IMR-90 (cell line): ENCODE measurements at regions of chr14 and their contacts with region 1.

Region 1: GRCh38 chr14:64478634-64479250 is 13.4 kb downstream of the AKAP5 start:
- DNase-seq: peak; percentile 37
- ATAC-seq: peak; percentile 56
- H3K4me3 ChIP-seq: no peak overlapping the region
- H3K27ac ChIP-seq: no peak overlapping the region
- H3K4me1 ChIP-seq: no peaks in the 10 kb centered on the region
- H3K27me3 ChIP-seq: no peaks in the 10 kb centered on the region
- CTCF ChIP-seq: peak; percentile 60
- POLR2A ChIP-seq: no peak
- RAD21 ChIP-seq: peak; percentile 62

Region 2: DNA sequence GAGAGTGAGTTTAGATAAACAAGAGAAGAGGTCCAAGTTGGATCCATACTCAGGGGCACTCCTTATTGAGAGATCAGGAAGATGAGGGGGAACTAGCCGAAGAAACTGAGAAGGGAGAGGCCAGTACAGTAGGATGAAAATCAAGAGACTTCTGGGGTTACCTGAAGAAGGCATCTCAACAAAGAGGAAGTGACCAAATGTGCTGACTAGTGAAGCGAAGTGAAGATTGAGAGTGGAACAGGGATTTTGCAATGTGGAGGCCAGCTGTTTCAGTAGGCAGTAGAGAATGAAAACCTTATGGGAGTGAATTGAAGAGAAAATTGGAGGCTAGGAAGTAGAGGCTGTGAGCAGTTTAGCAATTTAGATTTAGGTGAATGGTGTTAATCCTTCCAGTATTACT is 472.9 kb before region 1 on chr14:
- CTCF ChIA-PET with region 1: no interaction called
- POLR2A ChIA-PET with region 1: no interaction called
- dilution Hi-C with region 1: no loop called
- in situ Hi-C with region 1: loop called (anchors 25 kb)
- intact Hi-C with region 1: no loop called
- DNase-seq: no peak
- ATAC-seq: no peak
- H3K4me3 ChIP-seq: no peak overlapping the region
- H3K27ac ChIP-seq: no peak overlapping the region
- H3K4me1 ChIP-seq: no peaks in the 10 kb centered on the region
- H3K27me3 ChIP-seq: no peaks in the 10 kb centered on the region
- CTCF ChIP-seq: no peak
- POLR2A ChIP-seq: no peak
- RAD21 ChIP-seq: no peak